ENCODE measurements at regions of chr4 and their contacts with region 1.

Region 1: DNA sequence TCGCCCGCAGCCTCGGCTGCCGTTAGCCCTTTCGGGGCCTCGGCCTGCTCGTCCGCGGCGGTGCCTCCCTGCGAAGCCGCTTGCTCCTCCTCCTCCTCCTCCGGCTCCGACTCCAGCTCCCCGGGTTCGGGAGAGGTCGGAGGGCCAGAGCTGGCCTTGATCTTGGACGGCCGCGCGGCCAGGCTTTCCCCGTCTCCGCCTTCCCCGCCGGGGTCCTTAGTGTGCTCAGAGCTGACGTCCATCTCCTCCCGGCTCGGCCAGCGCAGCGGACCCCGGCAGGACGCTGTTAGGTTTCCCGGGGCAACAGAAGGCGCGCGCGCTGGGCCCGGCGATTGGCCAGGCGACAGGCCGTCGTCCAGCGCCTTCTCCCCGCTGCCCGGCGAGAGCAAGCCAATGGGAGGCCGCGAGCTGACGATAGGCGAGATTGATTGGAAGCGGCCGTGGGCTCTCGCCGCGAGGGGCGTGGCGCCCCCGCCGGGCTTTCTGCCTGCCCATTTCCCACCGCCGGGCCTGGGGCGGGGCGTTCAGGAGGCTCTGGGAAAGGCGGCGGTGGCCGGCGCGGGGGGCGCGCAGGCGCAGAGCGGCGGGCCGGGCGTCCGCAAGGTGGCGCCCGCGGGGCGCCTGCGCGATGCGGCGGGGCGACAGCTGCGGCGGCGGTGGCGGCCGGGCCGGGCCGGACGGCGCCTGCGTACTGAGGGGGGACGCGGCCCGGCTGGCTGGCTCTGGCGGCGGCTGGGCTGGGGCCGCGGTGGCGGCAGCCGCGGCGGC is at the start of gene TADA2B:
- DNase-seq: peak; percentile 90 to 99 (median 97)

Region 2: GRCh38 chr4:6909073-6909965 is 133.6 kb before region 1 on chr4 and contains the start of gene TBC1D14:
- intact Hi-C with region 1: loop called (anchors 1 kb)
- DNase-seq: peak; percentile 79 to 98 (median 86)

Region 3: DNA sequence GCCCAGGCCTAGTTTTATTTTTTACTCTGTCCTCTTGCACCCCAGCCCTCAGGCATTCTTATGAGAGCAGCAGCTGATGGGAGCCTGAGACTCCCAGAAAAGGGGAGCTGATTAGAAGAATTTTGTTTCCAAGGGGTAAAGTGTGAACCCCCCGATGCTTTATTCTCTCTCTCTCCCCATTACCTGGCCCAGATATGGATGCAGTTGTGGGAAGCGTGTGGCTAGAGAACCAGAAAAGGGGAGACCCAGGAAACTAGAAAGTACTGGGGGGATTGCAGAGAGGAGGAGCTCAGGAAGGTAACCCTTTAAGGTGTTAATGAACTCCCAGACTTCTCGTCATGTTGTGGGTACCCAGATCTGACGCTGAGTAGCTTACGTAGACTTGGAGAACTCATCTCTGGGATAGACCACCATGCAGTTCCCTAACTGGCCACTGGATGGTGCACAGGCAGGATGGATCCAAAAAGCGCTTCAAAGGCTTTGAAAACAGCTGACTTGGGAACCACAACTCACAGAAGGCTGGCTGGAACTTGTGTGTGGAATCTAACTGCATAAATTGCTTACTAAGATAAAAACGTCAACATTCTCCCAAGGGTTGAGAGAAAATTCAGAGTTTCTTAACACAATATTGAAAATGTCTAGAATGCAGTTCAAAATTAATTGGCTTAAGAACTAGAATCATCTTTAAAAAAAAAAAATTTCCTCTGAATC is 68.6 kb before region 1 on chr4:
- intact Hi-C with region 1: no loop called
- DNase-seq: peak; percentile 59 to 96 (median 86)

Region 4: GRCh38 chr4:6986781-6987587 is 55.9 kb before region 1 on chr4:
- intact Hi-C with region 1: loop called (anchors 1 kb)
- DNase-seq: peak; percentile 92 to 100 (median 96)

Region 5: DNA sequence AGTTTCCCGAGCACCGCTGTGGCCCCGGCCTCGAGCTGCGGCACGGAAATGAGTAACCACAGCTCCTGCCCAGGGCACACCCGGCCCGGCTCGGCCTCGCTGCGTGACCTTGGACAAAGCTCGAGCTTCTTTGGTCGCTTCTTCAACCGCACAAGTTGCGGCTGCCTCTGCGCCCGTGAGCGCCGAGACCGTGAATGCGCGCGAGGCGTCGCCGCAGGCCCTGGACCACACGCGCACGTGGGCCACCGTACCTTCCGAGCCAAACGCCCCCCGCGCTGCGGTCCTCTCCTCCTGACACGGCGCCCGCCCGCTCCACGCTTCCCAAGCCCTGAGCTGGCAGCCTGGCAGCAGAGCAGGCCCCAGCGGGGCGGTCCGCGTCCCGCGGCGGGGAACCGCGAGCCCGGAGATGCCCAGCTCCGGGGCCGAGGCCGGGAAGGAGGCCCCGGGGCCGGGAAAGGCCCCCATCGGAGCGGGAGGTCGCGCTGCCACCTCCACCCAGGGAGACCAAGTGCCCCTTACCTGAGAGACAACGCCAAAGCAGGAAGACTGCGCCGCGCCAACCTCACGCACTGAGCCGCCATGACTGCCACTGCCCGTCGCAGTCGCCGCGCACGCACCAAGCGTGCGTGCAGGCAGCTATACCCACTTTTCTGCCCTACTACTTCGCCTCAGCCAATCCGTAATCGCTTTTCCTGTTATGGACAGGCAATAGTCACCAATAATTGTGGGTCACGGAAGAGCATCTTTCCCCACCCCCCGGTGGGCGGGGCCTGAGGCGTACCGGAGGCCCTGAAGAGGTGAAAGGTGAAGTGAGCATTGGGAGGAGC is 24.8 kb after region 1 on chr4 and contains the start of gene GRPEL1:
- intact Hi-C with region 1: loop called (anchors 1 kb)
- DNase-seq: peak; percentile 98 to 100 (median 99)

Region 6: DNA sequence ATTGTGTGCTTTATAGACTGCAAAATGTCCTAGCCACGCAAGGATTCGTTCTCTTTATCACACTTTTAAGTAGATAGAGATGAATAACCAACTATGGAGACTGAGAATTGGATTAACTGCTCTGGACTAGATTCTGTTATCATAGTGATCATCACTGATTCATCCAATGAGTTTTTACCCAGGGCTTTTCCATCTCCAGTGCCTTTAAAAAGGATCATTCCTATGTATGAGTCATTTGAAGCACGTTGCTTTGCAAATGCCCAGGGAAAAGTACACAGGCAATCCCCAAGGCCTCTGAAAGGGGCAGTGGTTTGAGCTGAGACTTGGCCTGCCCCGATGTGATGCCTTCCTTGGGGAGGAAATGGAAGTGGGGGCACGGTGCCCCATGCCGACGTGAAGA is 514.6 kb after region 1 on chr4:
- intact Hi-C with region 1: no loop called
- DNase-seq: peak in 1 of 10 donors; percentile 65